ENCODE measurements at regions of chr20 and their contacts with region 1.

Region 1: DNA sequence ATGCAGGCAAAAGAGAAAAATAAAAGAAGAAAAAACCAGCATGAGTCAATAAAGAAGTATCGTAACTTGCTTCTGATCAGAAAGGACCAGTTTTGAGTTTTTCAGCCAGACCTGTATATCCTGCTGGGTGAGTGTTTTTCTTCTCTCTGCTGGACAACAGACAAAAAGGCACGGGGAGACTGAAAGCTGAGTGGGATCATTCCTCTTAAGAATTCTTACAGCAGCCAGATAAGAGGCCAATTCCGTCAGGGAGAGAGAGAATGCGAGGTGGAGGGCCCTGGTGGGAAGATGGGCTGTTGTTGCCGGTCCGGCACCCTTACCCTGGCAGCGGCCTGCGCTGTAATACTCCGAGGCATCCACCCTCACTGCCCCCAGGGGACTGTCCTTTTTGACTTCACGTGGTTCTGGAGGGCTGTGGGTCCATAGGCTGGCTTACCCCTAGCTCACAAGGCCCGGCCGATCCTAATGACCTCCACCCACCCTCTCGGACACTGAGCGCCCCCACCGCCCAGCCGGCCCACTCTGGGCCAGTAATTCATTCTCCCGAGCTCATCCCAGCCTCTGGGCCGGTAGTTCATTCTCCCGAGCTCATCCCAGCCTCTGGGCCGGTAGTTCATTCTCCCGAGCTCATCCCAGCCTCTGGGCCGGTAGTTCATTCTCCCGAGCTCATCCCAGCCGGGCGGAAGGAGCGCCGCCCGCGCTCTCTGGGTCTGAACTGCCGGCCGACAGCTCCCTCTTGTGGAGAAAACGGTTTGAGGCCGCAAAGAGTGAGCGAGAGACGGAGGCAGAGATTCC is 118.3 kb upstream of the SIRPA start:
- DNase-seq: peak; percentile 83
- H3K4me3 ChIP-seq: peak overlapping the region; percentile 83
- H3K27ac ChIP-seq: peak overlapping the region; percentile 68
- H3K27me3 ChIP-seq: peaks cover 4% of the 10 kb centered on the region
- CTCF ChIP-seq: peak; percentile 83

Region 2: DNA sequence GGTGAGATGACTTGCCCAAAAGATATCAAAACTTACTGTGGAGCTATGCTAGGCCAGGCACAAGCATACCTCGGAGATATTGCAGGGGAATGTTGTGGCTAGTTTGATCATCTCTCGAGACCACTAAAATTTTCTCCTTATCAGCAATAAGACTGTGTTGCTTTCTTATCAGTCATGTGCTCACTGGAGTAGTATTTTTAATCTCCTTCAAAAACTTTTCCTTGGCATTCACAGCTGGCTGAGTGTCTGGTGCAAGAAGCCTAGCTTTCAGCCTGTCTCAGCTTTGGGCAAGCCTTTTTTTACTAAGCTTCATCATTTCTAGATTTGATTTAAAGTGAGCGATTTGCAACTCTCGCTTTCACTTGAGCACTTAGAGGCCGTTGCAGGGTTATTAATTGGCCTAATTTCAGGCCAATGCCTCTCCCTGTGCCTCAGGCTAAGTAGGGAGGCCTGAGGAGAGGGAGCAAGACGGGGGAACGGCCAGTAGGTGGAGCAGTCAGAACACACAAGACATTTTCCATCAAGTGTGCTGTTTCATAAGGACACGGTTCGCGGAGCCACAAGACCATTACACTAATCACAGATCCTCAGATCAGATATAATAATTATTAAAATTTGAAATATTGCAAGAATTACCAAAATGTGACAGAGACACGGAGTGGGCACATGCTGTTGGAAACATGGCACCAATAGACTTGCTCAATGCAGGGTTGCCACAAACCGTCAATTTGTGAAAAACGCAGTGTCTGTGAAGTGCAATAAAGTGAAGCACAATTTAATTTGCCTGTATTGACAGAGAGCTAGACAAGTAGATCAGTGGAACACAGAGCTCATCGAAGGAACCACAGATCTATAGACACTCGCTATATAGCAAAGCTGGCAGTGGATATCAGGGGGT is 12.5 kb before region 1 on chr20:
- CTCF ChIA-PET with region 1: interaction called, 126 read pairs
- POLR2A ChIA-PET with region 1: interaction called, 6 read pairs
- DNase-seq: peak; percentile 62
- H3K4me3 ChIP-seq: no peak overlapping the region
- H3K27ac ChIP-seq: no peak overlapping the region
- H3K27me3 ChIP-seq: no peaks in the 10 kb centered on the region
- CTCF ChIP-seq: peak; percentile 95

Region 3: DNA sequence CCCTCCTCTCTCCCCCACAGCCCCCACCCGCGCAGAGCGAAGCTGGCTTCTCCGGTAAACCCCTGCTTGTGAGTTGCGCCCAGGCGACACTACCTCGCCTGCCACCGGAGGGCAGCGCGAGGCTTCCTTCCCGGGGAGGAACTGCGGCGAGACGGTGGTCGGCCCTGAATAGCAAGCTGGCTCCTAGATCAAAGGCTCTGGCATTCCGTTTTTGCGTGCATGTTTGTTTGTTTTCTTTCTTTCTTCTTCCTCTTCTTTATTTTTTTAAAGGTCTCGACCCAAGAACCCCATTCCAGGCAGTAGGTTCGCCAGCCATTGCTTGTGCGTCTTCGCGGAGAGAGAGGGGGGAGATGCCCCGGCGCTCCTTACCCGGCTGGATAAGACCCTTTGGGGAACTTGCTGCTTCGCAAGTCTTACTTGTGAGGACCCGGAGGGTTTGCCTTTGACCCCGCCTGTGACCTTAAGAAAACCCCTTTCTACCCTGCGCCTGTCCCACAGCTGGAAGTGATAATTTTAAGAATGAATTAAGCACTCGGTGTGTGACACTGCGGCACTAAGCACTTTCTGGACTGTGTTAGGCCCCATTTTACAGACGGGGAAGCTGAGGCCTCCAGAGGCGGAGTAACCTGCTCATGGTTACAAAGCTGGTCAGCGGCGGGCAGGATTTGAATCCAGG is 25.6 kb after region 1 on chr20:
- CTCF ChIA-PET with region 1: interaction called, 116 read pairs
- POLR2A ChIA-PET with region 1: interaction called, 5 read pairs
- DNase-seq: no peak
- H3K4me3 ChIP-seq: peak overlapping the region; percentile 58
- H3K27ac ChIP-seq: no peak overlapping the region
- H3K27me3 ChIP-seq: no peaks in the 10 kb centered on the region
- CTCF ChIP-seq: peak; percentile 61

Region 4: DNA sequence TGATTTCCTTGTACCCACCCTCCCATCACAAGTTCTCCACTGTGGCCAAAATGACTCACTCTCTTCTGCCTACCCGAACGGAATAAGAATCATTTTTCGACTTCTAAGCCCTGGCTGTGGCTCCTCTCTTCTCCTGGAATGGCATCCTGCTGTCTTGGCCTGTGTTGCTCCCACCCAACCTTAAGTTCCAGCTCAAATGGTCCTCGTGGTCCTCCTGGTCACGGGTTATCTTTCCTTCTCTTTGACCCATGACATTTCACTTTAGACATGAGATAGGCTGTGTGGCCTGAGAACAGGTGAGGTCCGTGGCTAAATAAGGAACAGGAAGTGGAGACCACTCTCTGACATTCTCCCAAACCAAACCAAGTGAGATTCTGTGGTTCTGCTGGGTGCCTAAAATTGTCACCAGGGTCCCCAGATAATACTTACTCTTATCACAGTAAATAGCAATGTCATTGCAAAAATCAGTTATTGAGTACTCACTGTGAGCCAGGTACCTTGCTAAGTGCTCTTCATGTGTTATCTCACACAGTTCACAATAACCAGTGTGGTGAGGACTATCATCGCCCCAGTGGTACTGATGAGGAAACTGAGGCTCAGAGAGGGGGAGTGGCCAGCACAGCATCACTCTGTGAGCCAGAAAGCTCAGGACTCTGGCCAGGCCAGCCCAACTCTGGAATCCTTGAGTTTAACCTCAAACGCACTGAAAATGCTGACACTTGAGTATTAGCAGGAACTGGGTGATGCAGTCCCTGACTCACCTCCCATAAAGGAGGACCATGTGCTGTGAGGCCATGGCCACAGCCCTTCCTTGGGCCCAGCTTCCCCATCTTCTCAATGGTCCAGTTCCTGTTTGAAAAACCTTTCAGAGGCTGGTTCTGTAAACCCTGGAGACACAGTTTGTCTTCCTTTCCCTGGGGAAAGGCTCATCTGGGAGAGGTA is 43.5 kb after region 1 on chr20:
- CTCF ChIA-PET with region 1: interaction called, 11 read pairs
- POLR2A ChIA-PET with region 1: no interaction called
- DNase-seq: no peak
- H3K4me3 ChIP-seq: no peak overlapping the region
- H3K27ac ChIP-seq: no peak overlapping the region
- H3K27me3 ChIP-seq: no peaks in the 10 kb centered on the region
- CTCF ChIP-seq: no peak

Region 5: GRCh38 chr20:1900321-1900801 is 123.5 kb after region 1 on chr20:
- CTCF ChIA-PET with region 1: interaction called, 13 read pairs
- POLR2A ChIA-PET with region 1: no interaction called
- DNase-seq: peak; percentile 60
- H3K4me3 ChIP-seq: no peak overlapping the region
- H3K27ac ChIP-seq: peak overlapping the region; percentile 61
- H3K27me3 ChIP-seq: no peaks in the 10 kb centered on the region
- CTCF ChIP-seq: peak; percentile 85